Lower leg skin (tissue), 4 donors: ENCODE measurements at regions of chr11 and their contacts with region 1.

Region 1: GRCh38 chr11:33598426-33599069 is 102.1 kb downstream of the C11orf91 start:
- DNase-seq: no peak
- H3K4me3 ChIP-seq: no peak overlapping the region
- CTCF ChIP-seq: no peak
- POLR2A ChIP-seq: no peak

Region 2: GRCh38 chr11:32497951-32498350 is 1100.6 kb before region 1 on chr11:
- intact Hi-C with region 1: loop called (anchors 5 kb)
- DNase-seq: no peak
- H3K4me3 ChIP-seq: no peak overlapping the region
- CTCF ChIP-seq: no peak
- POLR2A ChIP-seq: no peak

Region 3: DNA sequence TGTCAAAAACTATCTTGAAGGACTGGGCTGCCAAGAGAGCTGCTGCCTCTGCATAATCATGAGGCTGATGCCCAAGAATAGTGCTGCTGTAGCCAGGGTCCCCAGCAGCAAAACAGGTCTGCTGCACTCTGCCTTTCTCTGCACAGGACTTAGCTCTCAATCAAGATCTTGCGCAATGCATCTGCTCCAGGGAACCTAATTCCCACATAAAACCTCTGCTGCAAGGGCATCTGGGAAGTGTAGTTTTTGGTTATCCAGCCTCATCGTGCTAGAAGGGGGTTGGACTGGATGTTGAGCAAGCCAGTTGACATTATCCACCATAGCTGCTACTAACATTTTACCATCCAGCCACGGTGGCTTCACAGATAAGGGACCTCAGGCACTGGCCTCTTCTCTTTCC is 90.6 kb before region 1 on chr11:
- intact Hi-C with region 1: no loop called
- DNase-seq: no peak
- H3K4me3 ChIP-seq: no peak overlapping the region
- CTCF ChIP-seq: no peak
- POLR2A ChIP-seq: no peak